H1 (cell line): ENCODE measurements at regions of chr17 and their contacts with region 1.

Region 1: DNA sequence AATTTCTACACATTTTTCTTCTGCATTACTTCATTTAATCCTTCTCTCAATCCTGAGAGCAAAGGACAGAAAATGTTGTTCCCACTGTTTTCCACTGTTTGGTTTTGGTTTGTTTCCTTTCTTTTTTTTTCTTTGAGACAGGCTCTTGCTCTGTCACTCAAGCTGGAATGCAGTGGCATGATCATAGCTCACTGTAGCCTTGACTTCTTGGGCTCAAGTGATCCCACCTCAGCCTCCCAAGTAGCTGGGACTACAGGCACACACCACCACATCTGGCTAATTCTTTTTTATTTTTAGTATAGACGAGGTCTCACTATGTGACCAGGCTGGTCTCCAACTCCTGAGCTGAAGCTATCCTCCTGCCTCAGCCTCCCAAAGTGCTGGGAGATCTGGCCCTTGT is 7.0 kb upstream of the ZNF652 start:
- DNase-seq: no peak
- H3K4me3 ChIP-seq: no peak overlapping the region
- H3K27ac ChIP-seq: no peak overlapping the region
- H3K4me1 ChIP-seq: peaks cover 7 to 18% (median 14%) of the 10 kb centered on the region in 4 experiments; a peak in 6 of 7 replicates
- H3K27me3 ChIP-seq: no peaks in the 10 kb centered on the region
- CTCF ChIP-seq: no peak
- EP300 ChIP-seq: no peak
- POLR2A ChIP-seq: no peak
- RAD21 ChIP-seq: no peak

Region 2: GRCh38 chr17:49343273-49343672 is 25.8 kb before region 1 on chr17:
- CTCF ChIA-PET with region 1: interaction called, 10 read pairs
- POLR2A ChIA-PET with region 1: interaction called, 3 read pairs
- DNase-seq: no peak
- H3K4me3 ChIP-seq: no peak overlapping the region
- H3K27ac ChIP-seq: no peak overlapping the region
- H3K4me1 ChIP-seq: no peaks in the 10 kb centered on the region
- H3K27me3 ChIP-seq: no peaks in the 10 kb centered on the region
- CTCF ChIP-seq: no peak
- EP300 ChIP-seq: no peak
- POLR2A ChIP-seq: no peak
- RAD21 ChIP-seq: no peak

Region 3: DNA sequence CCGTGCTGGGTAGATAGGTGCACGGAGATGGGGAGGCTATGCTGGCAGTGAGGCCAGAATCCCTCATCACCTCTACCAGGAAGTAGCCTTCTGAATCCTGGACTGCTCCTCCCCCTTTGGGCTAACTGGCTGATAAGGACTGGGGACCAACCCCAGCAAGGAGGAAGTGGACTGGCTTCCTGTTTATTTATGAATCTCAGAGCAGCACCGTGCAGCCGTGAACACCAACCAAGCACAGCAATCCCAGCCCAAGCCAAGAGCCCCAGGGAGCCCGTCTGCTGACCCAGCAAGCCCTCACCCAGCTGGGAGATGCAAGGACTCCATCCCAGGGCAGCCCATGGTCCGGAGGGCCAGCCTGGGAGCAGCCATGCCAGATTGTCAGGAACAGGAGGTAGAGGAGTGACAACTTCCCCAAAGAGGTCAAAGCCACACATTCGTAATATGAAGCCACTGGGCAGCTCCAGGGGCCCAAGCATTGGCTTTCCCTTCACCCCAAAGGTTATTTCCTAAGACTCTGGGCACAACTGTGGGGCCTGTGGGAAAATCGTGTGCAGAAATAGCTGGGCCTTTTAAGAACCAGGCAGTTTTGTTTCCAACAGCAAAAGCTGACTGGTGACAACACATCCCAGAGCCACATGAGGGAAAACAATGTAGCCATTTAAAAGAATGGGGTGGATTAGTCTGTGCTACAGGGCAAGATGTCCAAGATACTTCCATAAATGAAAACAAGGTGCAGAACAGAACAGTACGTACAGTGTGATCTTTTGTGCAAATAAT is 21.6 kb after region 1 on chr17:
- CTCF ChIA-PET with region 1: interaction called, 16 read pairs
- POLR2A ChIA-PET with region 1: interaction called, 3 read pairs
- DNase-seq: no peak
- H3K4me3 ChIP-seq: no peak overlapping the region
- H3K27ac ChIP-seq: no peak overlapping the region
- H3K4me1 ChIP-seq: no peaks in the 10 kb centered on the region
- H3K27me3 ChIP-seq: no peaks in the 10 kb centered on the region
- CTCF ChIP-seq: no peak
- EP300 ChIP-seq: no peak
- POLR2A ChIP-seq: no peak
- RAD21 ChIP-seq: no peak

Region 4: GRCh38 chr17:49399995-49400394 is 30.9 kb after region 1 on chr17:
- CTCF ChIA-PET with region 1: interaction called, 16 read pairs
- POLR2A ChIA-PET with region 1: interaction called, 3 read pairs
- DNase-seq: no peak
- H3K4me3 ChIP-seq: no peak overlapping the region
- H3K27ac ChIP-seq: no peak overlapping the region
- H3K4me1 ChIP-seq: no peaks in the 10 kb centered on the region
- H3K27me3 ChIP-seq: no peaks in the 10 kb centered on the region
- CTCF ChIP-seq: no peak
- EP300 ChIP-seq: no peak
- POLR2A ChIP-seq: no peak
- RAD21 ChIP-seq: no peak